ENCODE measurements at regions of chr22 and their contacts with region 1.

Region 1: DNA sequence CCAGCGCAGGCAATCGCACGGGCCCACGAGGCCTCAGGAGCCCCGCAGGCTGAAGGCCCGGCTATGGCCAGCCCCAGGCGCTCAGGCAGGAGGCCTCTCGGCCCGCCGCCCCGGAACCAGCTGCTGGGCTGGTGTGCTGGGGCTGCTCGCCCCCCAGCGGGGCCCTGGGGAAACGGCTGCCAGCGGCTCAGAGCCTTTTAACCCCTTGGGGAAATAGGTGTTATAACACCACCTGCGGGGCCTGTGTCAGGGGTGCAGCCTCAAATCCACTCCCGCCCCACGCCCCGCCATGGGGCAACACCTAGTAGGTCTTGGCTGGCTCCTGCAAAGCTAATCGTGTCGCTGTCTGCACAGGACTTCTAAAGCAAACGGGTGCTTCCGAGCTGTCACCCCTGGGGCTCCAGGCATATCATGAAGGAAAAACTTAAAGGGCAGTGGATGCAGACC is 237.4 kb downstream of the TTC28 start:
- DNase-seq: peak; percentile 77
- H3K4me3 Mint-ChIP-seq: peak overlapping the region; percentile 69
- H3K27ac Mint-ChIP-seq: no peak overlapping the region
- H3K4me1 Mint-ChIP-seq: peaks cover 18% of the 10 kb centered on the region
- H3K27me3 Mint-ChIP-seq: peaks cover 36% of the 10 kb centered on the region

Region 2: DNA sequence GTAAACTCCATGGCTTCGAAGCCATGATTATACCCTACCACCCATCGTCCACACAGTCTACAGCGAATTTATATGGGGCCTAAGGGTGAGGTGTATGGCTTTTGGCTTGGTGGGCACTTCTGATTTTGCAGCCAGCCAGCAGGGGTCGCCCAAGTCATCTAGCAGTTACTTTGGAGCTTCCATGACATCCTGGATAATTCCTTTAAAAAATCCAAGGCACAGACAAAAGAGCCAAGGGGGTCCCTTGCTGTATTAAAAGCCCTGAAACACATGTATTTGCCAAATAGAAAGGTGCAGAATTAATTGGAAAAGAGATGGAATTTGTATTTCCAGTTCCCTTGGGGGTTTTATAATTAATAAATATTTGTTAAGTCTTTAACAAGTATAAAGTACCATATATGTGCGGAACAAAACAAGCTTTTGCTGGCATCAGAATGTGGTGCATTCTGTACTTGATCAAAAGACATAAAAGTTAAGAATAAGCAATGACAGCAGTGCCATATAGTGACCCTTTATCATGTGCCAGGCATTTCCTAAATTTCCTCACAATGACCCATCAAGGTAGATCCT is 390.4 kb before region 1 on chr22:
- CTCF ChIA-PET with region 1: interaction called, 18 read pairs
- POLR2A ChIA-PET with region 1: no interaction called
- DNase-seq: peak; percentile 28
- H3K4me3 Mint-ChIP-seq: no peak overlapping the region
- H3K27ac Mint-ChIP-seq: no peak overlapping the region
- H3K4me1 Mint-ChIP-seq: no peaks in the 10 kb centered on the region
- H3K27me3 Mint-ChIP-seq: peaks cover 17% of the 10 kb centered on the region